GM12878 (cell line): ENCODE measurements at regions of chr12 and their contacts with region 1.

Region 1: DNA sequence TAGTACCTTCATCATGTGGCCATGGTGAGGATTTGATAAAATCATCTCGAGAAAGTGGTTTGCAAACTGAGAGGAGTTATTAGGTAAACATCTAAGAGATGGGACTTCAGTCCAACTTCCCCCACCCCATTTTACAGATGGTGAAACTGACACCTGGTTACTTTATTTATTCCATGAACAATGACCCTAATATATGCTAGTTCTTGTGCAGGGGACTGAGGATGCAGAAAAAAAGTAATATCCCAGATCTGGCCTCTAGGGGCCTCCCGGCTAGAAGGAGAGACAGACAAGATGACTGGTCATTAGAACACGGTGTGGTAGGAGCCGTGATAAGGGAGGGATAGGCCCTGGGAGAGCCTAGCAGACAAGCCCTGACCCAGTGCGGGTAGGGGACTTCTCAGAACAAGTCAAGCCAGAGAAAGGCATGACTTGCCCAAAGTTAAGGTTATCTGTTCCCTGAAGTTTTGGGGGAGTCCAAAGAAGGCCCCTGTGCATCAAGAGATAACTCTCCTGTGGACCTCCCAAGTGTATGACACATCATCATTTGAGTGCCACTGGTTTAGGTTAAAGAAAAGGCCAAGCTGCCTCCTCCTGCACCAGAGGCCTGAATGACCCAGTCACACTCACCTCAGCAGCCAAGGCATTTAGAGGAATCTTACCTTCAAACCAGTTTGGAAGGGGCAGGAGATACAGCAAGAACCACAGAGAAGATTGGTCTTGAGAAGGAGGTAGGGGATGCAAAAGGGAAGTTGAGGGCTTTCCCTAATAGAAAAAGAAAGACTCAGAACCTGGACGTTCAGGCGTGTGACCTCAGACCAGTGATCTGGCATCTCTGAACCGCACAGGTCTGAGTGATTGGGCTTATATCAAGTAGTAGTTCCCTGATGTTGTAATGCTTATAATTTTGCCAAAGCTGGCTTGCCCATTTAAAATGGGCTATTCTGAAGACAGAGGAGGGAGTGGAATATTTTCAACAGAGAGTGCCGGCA is 1.6 kb downstream of the CMKLR1 start:
- DNase-seq: no peak
- ATAC-seq: peak; percentile 68
- H3K4me3 ChIP-seq: no peak overlapping the region
- H3K27ac ChIP-seq: peak overlapping the region; percentile 84
- H3K4me1 ChIP-seq: peaks cover 63% of the 10 kb centered on the region
- H3K27me3 ChIP-seq: no peaks in the 10 kb centered on the region
- CTCF ChIP-seq: peak; percentile 52 to 66 (median 63)
- EP300 ChIP-seq: peak; percentile 19 to 29; a peak in 1 of 4 replicates
- POLR2A ChIP-seq: no peak
- RAD21 ChIP-seq: peak; percentile 70

Region 2: GRCh38 chr12:108253540-108253939 is 84.0 kb before region 1 on chr12:
- CTCF ChIA-PET with region 1: no interaction called
- POLR2A ChIA-PET with region 1: no interaction called
- RAD21 ChIA-PET with region 1: no interaction called
- SMC1A ChIA-PET with region 1: no interaction called
- in situ Hi-C with region 1: no loop called
- intact Hi-C with region 1: no loop called
- DNase-seq: no peak
- ATAC-seq: no peak
- H3K4me3 ChIP-seq: no peak overlapping the region
- H3K27ac ChIP-seq: no peak overlapping the region
- H3K4me1 ChIP-seq: no peaks in the 10 kb centered on the region
- H3K27me3 ChIP-seq: peaks cover 0 to 3% of the 10 kb centered on the region in 2 experiments; a peak in 1 of 4 replicates
- CTCF ChIP-seq: no peak
- EP300 ChIP-seq: no peak
- POLR2A ChIP-seq: no peak
- RAD21 ChIP-seq: no peak

Region 3: GRCh38 chr12:108297895-108298760 is 39.4 kb before region 1 on chr12:
- CTCF ChIA-PET with region 1: interaction called, 7 read pairs
- POLR2A ChIA-PET with region 1: interaction called, 4 read pairs
- RAD21 ChIA-PET with region 1: interaction called, 8 read pairs
- SMC1A ChIA-PET with region 1: interaction called, 11 read pairs
- in situ Hi-C with region 1: no loop called
- intact Hi-C with region 1: loop called (anchors 1 kb)
- DNase-seq: peak; percentile 76
- ATAC-seq: peak; percentile 91
- H3K4me3 ChIP-seq: 0 out of 2 replicates have a peak overlapping the region, but pooled peaks have one; percentile 11
- H3K27ac ChIP-seq: peak overlapping the region; percentile 71
- H3K4me1 ChIP-seq: peaks cover 55% of the 10 kb centered on the region
- H3K27me3 ChIP-seq: no peaks in the 10 kb centered on the region
- CTCF ChIP-seq: no peak
- EP300 ChIP-seq: no peak
- POLR2A ChIP-seq: no peak
- RAD21 ChIP-seq: no peak

Region 4: GRCh38 chr12:108313606-108314351 is 23.8 kb before region 1 on chr12:
- CTCF ChIA-PET with region 1: interaction called, 75 read pairs
- POLR2A ChIA-PET with region 1: interaction called, 35 read pairs
- RAD21 ChIA-PET with region 1: interaction called, 63 read pairs
- SMC1A ChIA-PET with region 1: interaction called, 185 read pairs
- in situ Hi-C with region 1: no loop called
- intact Hi-C with region 1: loop called (anchors 1 kb)
- DNase-seq: no peak
- ATAC-seq: peak; percentile 56
- H3K4me3 ChIP-seq: peak overlapping the region; percentile 9; the same call in 1 of the 2 replicates
- H3K27ac ChIP-seq: peak overlapping the region; percentile 71
- H3K4me1 ChIP-seq: peaks cover 80% of the 10 kb centered on the region
- H3K27me3 ChIP-seq: no peaks in the 10 kb centered on the region
- CTCF ChIP-seq: no peak
- EP300 ChIP-seq: no peak
- POLR2A ChIP-seq: no peak
- RAD21 ChIP-seq: no peak

Region 5: GRCh38 chr12:108320507-108321293 is 16.8 kb before region 1 on chr12:
- CTCF ChIA-PET with region 1: interaction called, 75 read pairs
- POLR2A ChIA-PET with region 1: interaction called, 35 read pairs
- RAD21 ChIA-PET with region 1: interaction called, 63 read pairs
- SMC1A ChIA-PET with region 1: interaction called, 185 read pairs
- in situ Hi-C with region 1: no loop called
- intact Hi-C with region 1: loop called (anchors 1 kb)
- DNase-seq: peak; percentile 85
- ATAC-seq: peak; percentile 90
- H3K4me3 ChIP-seq: peak overlapping the region; percentile 69
- H3K27ac ChIP-seq: peak overlapping the region; percentile 89
- H3K4me1 ChIP-seq: peaks cover 50% of the 10 kb centered on the region
- H3K27me3 ChIP-seq: no peaks in the 10 kb centered on the region
- CTCF ChIP-seq: no peak
- EP300 ChIP-seq: no peak
- POLR2A ChIP-seq: 0 out of 2 replicates have a peak, but pooled peaks have one; percentile 26
- RAD21 ChIP-seq: no peak

Region 6: DNA sequence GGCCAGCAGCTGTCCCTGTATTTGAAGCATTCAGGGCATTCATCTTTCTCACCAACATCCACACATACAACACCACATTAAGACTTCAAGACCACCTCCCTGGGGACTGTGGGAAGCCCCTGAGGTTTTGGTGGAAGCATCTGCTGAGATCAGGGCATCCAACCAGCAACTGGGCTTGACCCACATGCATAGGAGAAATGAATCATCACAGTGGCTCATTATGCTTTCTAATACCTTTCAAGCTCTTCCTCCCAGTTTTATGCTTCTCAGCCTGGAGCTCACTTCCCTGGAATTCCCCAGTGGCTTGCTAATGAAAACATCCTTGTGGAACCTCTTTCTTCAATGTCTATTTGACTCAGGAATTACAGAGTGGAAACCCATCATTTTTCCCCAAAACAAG is 23.0 kb after region 1 on chr12:
- CTCF ChIA-PET with region 1: interaction called, 7 read pairs
- POLR2A ChIA-PET with region 1: interaction called, 13 read pairs
- RAD21 ChIA-PET with region 1: interaction called, 47 read pairs
- SMC1A ChIA-PET with region 1: interaction called, 37 read pairs
- in situ Hi-C with region 1: no loop called
- intact Hi-C with region 1: loop called (anchors 1 kb)
- DNase-seq: peak; percentile 84
- ATAC-seq: peak; percentile 86
- H3K4me3 ChIP-seq: no peak overlapping the region; the same call in 1 of the 2 replicates
- H3K27ac ChIP-seq: peak overlapping the region; percentile 57
- H3K4me1 ChIP-seq: peaks cover 30% of the 10 kb centered on the region
- H3K27me3 ChIP-seq: no peaks in the 10 kb centered on the region
- CTCF ChIP-seq: no peak
- EP300 ChIP-seq: peak; percentile 54 to 73; a peak in 3 of 4 replicates
- POLR2A ChIP-seq: no peak
- RAD21 ChIP-seq: 0 out of 2 replicates have a peak, but pooled peaks have one; percentile 21

Region 7: DNA sequence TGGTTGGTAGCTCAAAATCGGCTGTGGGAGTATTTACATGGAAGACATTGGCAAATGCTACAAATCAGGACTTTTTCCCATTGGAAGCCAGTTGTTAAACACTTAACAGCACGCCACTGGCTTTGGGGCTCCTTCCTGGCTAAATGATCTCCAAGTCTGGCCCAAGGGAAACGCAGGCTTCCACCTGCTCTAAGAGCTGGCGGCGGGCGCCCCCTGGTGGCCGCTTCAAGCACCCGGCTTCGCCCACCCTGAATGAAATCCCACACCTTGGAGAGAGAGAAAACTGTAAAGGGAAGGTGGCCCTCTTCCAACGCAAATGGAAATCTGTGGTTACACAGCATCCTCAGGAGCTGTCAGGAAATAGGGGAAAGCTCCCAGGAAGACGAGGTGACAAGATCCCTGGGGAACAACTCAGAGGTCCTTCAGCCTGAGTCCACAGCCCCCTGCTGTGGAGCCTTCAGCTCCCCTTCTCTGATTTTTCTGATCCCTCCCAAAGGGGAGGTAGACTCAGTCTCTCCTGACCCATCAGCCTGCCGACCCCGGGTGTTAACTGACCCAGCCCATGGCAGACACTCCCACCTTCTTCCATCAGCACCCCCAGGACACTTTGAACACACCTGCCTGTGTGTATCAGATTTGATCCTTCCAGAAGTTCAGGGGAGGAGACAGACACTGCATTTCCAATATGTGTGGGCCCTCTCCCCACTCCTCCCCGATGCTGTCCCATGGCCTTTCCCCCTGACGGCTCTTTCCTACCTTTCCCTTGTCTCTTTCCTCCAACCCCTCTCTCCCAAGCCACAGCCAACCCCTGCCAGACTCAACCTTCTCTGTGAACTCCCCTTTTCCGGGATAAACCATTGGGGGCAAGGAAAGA is 280.8 kb after region 1 on chr12:
- CTCF ChIA-PET with region 1: interaction called, 3 read pairs
- POLR2A ChIA-PET with region 1: no interaction called
- RAD21 ChIA-PET with region 1: no interaction called
- SMC1A ChIA-PET with region 1: no interaction called
- in situ Hi-C with region 1: loop called (anchors 5 kb)
- intact Hi-C with region 1: no loop called
- DNase-seq: no peak
- ATAC-seq: peak; percentile 73
- H3K4me3 ChIP-seq: no peak overlapping the region
- H3K27ac ChIP-seq: peak overlapping the region; percentile 99
- H3K4me1 ChIP-seq: peaks cover 47% of the 10 kb centered on the region
- H3K27me3 ChIP-seq: no peaks in the 10 kb centered on the region
- CTCF ChIP-seq: peak; percentile 92 to 95 (median 94)
- EP300 ChIP-seq: no peak
- POLR2A ChIP-seq: no peak
- RAD21 ChIP-seq: peak; percentile 96